Activated CD4-positive, alpha-beta T cell treated with anti-CD3 and anti-CD28 coated beads for 36 hours (primary cell): ENCODE measurements at regions of chr1 and their contacts with region 1.

Region 1: GRCh38 chr1:156129706-156130581 is 15.4 kb downstream of the LMNA start:
- DNase-seq: peak; percentile 89
- ATAC-seq: peak; percentile 27
- H3K4me3 Mint-ChIP-seq: no peak overlapping the region
- H3K27ac Mint-ChIP-seq: peak overlapping the region; percentile 49
- H3K4me1 Mint-ChIP-seq: peaks cover 54% of the 10 kb centered on the region
- H3K27me3 Mint-ChIP-seq: no peaks in the 10 kb centered on the region

Region 2: GRCh38 chr1:156090822-156091188 is 39.1 kb before region 1 on chr1:
- CTCF ChIA-PET with region 1: interaction called, 929 read pairs
- POLR2A ChIA-PET with region 1: interaction called, 103 read pairs
- intact Hi-C with region 1: loop called (anchors 1 kb)
- DNase-seq: peak; percentile 95
- ATAC-seq: peak; percentile 95
- H3K4me3 Mint-ChIP-seq: no peak overlapping the region
- H3K27ac Mint-ChIP-seq: no peak overlapping the region
- H3K4me1 Mint-ChIP-seq: peaks cover 12% of the 10 kb centered on the region
- H3K27me3 Mint-ChIP-seq: peaks cover 16% of the 10 kb centered on the region

Region 3: GRCh38 chr1:156104065-156104810 is 25.7 kb before region 1 on chr1:
- CTCF ChIA-PET with region 1: interaction called, 929 read pairs
- POLR2A ChIA-PET with region 1: interaction called, 103 read pairs
- intact Hi-C with region 1: loop called in 1 of 2 experiments (anchors 1 kb)
- DNase-seq: peak; percentile 64
- ATAC-seq: peak; percentile 30
- H3K4me3 Mint-ChIP-seq: no peak overlapping the region
- H3K27ac Mint-ChIP-seq: peak overlapping the region; percentile 58
- H3K4me1 Mint-ChIP-seq: peaks cover 74% of the 10 kb centered on the region
- H3K27me3 Mint-ChIP-seq: peaks cover 5% of the 10 kb centered on the region

Region 4: GRCh38 chr1:156140879-156141252 is 10.9 kb after region 1 on chr1:
- CTCF ChIA-PET with region 1: interaction called, 33 read pairs
- POLR2A ChIA-PET with region 1: no interaction called
- intact Hi-C with region 1: no loop called
- DNase-seq: no peak
- ATAC-seq: no peak
- H3K4me3 Mint-ChIP-seq: no peak overlapping the region
- H3K27ac Mint-ChIP-seq: peak overlapping the region; percentile 5
- H3K4me1 Mint-ChIP-seq: peaks cover 4% of the 10 kb centered on the region
- H3K27me3 Mint-ChIP-seq: no peaks in the 10 kb centered on the region

Region 5: DNA sequence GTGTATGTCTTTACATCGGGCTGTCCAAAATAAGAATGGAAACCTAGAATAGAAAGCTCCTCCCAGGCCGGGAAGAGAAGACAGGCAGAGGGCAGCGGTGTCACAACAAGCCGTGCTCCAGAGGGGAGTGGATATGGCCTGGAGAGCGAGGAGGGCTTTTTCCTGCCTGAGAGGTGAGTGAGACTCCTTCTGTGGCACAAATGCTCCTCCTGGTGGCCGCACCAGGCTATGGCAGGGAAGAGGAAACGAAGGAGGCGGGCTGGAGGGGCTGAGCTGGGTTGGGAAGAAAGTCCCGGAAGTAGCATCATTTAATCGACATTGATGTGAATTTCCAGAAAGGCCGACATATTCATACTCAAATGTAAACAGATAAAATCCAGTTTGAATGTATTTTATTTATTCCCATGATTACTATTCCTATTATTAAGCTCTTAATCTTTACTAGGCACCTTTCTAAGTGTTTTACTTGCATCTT is 315.9 kb after region 1 on chr1:
- CTCF ChIA-PET with region 1: no interaction called
- POLR2A ChIA-PET with region 1: no interaction called
- intact Hi-C with region 1: no loop called
- DNase-seq: peak; percentile 90
- ATAC-seq: peak; percentile 89
- H3K4me3 Mint-ChIP-seq: no peak overlapping the region
- H3K27ac Mint-ChIP-seq: no peak overlapping the region
- H3K4me1 Mint-ChIP-seq: peaks cover 16% of the 10 kb centered on the region
- H3K27me3 Mint-ChIP-seq: peaks cover 33% of the 10 kb centered on the region